Activated CD4-positive, alpha-beta memory T cell treated with anti-CD3 and anti-CD28 coated beads, Interleukin-2, amount 10 ng/mL, durations not matched to agents 7 days and 5 days (primary cell): ENCODE measurements at regions of chr16 and their contacts with region 1.

Region 1: DNA sequence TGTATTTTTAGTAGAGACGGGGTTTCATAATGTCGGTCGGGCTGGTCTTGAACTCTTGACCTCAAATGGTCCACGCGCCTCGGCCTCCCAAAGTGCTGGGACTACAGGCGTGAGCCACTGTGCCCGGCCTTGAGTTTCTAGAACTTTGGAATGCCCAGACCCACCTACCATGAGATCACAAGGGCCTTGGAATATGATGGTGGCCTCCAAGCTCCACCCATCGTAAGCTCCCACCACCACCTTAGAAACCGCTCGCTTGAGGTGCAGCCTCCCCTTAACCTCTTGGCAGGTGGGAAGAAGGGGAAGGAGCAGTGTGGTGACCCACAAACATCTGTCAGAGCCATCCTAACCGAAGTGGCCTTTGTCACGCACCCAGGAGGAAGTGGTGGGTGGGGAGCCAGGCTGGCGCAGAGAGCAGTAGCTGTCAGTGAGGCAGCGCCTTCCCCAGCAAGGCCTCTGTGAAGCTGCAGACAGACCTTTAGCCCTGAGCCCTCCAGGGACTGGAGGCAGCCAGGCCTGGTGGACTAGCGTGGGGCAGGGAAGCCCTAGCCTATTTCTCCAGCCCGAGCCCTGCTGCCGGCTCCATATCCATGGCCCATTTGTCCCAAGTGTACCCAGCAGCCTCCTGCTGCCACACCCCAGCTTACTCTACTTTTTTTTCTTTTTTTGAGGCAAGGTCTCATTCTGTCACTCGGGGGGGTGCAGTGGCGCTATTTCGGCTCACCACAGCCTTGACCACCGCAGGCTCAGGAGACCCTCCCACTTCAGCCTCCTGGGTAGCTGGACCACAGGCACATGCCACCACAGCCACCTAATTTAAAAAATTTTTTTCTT is 13.1 kb upstream of the SEPHS2 start:
- DNase-seq: peak; percentile 95
- H3K4me3 Mint-ChIP-seq: peak overlapping the region; percentile 67
- H3K27ac Mint-ChIP-seq: peak overlapping the region; percentile 98
- H3K4me1 Mint-ChIP-seq: peaks cover 74% of the 10 kb centered on the region
- H3K27me3 Mint-ChIP-seq: peaks cover 2% of the 10 kb centered on the region

Region 2: DNA sequence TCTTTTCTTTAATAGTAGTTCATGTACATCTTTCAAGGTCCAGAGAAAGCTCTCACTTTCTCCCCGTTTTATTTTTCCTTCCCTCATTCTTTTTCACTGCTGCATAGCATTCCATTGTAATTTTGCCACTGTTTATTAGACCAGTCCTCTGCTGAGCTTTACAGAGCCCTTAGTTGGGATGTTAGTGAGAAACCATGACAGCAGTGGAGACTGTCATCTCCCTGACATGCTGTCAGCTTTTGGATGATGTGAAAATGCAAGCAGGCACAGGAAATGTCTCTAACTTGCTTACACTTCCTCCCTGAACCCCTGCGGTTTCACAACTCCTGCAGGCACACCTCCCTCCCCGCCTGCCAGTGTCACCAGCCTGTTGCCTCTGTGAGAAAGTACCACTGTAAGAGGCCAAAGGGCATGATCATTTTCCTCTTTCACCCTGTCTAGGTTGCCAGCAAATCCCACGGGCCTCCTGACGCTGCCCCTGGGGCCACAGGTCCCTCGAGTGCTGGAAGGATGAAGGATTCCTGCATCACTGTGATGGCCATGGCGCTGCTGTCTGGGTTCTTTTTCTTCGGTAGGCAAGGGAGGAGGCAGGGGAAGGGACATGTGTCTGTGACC is 13.7 kb after region 1 on chr16 and contains the start of gene ITGAL:
- CTCF ChIA-PET with region 1: interaction called, 107 read pairs
- POLR2A ChIA-PET with region 1: interaction called, 400 read pairs
- DNase-seq: peak; percentile 92
- H3K4me3 Mint-ChIP-seq: peak within 1 kb of the TSS; percentile 98
- H3K27ac Mint-ChIP-seq: peak within 1 kb of the TSS; percentile 96
- H3K4me1 Mint-ChIP-seq: peaks cover 58% of the 10 kb centered on the region
- H3K27me3 Mint-ChIP-seq: no peaks in the 10 kb centered on the region
- total RNA-seq, gene ITGAL: 583 to 586 TPM

Region 3: DNA sequence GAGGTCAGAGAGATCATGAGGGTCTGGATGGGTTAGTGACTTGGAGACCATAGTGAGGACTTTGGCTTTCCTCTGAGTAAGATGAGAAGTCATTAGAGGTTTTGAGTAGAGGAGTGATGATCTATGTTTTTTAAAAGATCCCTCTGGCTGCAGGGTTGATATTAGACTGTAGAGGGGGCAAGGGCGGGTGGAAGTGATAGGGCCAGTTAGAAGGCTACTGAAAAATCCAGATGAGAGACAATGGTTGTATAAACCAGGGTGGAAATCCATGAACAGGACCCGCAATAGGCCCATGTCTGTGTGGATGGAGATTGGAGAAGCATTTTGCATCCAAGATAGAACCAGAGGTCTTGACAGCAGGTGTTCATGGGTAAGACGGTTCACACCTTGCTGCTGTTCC is 23.6 kb after region 1 on chr16:
- CTCF ChIA-PET with region 1: interaction called, 6 read pairs
- POLR2A ChIA-PET with region 1: interaction called, 400 read pairs
- DNase-seq: peak; percentile 23
- H3K4me3 Mint-ChIP-seq: peak overlapping the region; percentile 4
- H3K27ac Mint-ChIP-seq: peak overlapping the region; percentile 78
- H3K4me1 Mint-ChIP-seq: peaks cover 63% of the 10 kb centered on the region
- H3K27me3 Mint-ChIP-seq: no peaks in the 10 kb centered on the region